ENCODE measurements at regions of chr5 and their contacts with region 1.

Region 1: GRCh38 chr5:123700398-123701287 is 188.7 kb downstream of the CSNK1G3 start:
- DNase-seq: no peak
- H3K4me3 ChIP-seq: no peak overlapping the region
- H3K27ac ChIP-seq: no peak overlapping the region
- H3K27me3 ChIP-seq: no peaks in the 10 kb centered on the region
- CTCF ChIP-seq: no peak

Region 2: DNA sequence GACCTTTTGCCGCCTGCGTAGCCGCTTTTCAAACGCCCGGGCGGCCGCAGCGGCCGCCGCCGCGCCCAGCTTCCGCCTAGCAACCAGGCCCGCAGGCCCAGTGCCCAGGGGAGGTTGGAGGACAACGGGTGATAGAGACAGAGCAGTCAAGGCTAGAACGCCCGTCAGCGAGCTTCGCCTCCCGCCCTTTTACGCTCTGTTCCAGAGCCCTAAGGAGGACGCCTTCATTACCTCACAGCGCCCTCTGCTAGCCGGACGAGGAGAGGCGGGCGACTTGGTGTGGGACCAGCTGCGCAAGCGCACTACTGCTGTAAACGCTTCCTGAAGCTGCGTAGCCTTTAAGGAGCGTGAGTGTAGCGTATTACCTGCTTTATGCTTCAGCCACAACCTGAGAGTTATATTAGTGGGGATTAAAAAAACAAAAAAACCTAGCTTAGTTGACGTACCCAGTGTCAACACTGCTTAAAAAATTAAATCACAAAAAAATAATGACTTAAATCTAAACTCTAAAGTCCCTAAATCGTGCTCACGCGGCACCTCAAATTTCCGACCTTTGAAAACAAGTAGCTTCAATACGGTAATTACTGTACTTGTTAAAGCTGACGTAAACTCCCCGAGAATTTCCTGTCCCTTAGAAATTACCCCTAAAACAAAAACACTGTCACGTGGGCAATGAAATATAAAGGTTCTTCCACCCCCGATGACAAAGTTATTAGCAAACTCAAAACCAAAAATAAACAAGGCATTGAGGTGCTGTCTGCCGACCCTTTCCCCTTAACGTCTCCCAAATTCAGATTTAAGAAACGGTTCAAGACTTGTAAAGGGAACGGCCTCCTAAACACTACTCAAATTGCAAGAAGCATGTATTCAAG is 277.1 kb before region 1 on chr5 and contains the start of gene CEP120:
- intact Hi-C with region 1: no loop called
- DNase-seq: peak; percentile 94 to 99 (median 98)
- H3K4me3 ChIP-seq: peak within 1 kb of the TSS; percentile 58 to 97 (median 85)
- H3K27ac ChIP-seq: peak within 1 kb of the TSS in 58 of 59 donors; percentile 18 to 96 (median 85)
- H3K27me3 ChIP-seq: no peaks in the 10 kb centered on the region
- CTCF ChIP-seq: peak; percentile 28 to 96 (median 83)
- total RNA-seq, gene CEP120: 11.8 to 32.6 (median 21.2) TPM

Region 3: GRCh38 chr5:123545506-123545905 is 155.1 kb before region 1 on chr5:
- intact Hi-C with region 1: no loop called
- DNase-seq: no peak
- H3K4me3 ChIP-seq: peak overlapping the region in 1 of 59 donors; percentile 3
- H3K27ac ChIP-seq: no peak overlapping the region
- H3K27me3 ChIP-seq: no peaks in the 10 kb centered on the region
- CTCF ChIP-seq: peak in 34 of 56 donors; percentile 15 to 49 (median 31)

Region 4: DNA sequence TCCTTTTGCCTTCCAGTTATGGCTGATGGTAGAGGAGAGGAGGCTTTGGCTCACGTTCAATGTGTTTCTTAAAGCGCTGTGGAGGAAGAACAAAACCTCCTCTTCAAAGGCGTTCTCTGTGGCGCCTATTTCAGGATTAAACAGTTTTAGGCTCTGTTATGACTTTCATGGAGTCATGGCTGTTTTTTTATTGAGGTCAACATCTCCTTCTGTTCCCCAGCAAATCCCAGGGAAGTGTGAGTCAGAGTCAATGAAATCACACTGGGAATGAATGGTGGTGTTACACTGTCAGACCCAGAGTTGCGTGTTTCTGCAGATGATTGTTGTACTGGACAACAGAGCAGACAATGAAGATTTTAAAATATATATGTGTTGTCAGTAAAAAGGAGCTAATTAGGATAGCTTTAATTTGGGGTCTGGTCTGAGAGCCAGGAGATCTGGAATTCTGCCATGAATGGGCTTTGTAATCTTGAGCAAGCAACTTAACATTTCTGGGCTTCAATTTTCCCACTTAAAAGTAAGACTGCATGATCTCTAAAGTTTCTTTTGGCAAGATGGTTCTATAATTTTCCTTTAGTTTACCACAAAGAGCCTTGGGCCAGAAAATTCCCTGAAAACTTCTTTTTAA is 52.0 kb after region 1 on chr5:
- intact Hi-C with region 1: loop called (anchors 5 to 10 kb)
- DNase-seq: no peak
- H3K4me3 ChIP-seq: no peak overlapping the region
- H3K27ac ChIP-seq: peak overlapping the region in 24 of 59 donors; percentile 1 to 73 (median 26)
- H3K27me3 ChIP-seq: no peaks in the 10 kb centered on the region
- CTCF ChIP-seq: no peak

Region 5: DNA sequence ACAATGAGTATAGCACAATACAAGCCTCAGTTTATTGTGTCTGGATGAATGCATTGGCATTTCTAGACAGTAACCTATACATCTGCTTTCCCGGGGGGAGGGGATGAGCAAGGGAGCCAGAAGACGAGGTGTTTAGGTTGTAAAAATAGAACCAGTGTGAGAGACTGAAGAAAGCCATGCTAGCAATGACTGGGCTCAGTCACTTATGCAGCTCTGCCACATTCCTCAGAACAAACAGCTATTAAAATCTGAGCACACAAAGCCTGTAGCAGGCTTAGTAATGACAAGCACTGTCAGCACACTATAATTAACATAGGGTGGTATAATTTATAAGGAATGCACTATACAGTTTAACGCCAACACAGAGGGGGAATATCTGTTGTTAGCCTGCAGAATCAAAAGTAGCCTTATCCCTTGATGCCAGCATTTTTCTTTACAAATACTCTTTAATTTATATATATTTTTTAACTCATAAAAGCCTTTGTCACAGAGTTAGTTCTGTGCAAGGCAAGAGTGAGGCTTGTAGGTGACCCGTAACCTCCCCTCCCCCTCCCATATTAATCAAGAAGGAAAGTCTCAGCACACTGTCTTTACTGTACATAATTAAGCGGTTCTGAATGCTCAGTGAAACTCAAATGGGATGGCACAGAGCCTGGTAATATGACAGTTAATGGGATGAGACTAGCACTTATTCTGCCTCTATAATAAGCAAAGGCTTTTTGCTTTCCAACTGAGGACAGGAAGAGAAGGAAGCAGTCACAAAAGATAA is 106.7 kb after region 1 on chr5:
- intact Hi-C with region 1: loop called in 1 of 2 experiments (anchors 5 kb)
- DNase-seq: no peak
- H3K4me3 ChIP-seq: peak overlapping the region in 1 of 59 donors; percentile 27
- H3K27ac ChIP-seq: peak overlapping the region in 54 of 59 donors; percentile 5 to 90 (median 76)
- H3K27me3 ChIP-seq: no peaks in the 10 kb centered on the region
- CTCF ChIP-seq: no peak

Measured in dorsolateral prefrontal cortex (tissue), 120 donors.